AG04450 (cell line): ENCODE measurements at regions of chr12 and their contacts with region 1.

Region 1: DNA sequence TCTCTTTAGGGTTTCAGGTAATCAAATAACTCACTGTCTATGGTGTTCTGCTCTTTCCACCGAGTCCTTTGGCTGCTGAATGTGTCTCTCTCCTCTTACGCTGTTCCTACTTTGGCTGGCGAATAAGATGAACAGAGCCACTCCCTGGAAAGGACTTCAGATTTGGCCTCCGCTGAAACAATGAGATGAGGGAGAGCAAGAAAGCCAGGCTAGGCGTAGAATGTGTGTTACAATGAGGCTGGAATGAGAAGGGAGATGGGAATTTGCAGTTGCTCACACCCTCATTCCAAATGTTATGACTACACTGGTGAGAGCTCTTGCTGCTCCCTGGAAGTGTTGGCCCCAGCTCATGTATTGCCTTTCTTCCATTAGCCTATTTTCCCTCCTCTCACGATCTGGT is at the start of gene MFAP5:
- DNase-seq: no peak
- H3K4me3 ChIP-seq: no peak within 1 kb of the TSS
- H3K27ac ChIP-seq: no peak within 1 kb of the TSS
- H3K27me3 ChIP-seq: peaks cover 3% of the 10 kb centered on the region
- CTCF ChIP-seq: no peak
- polyA plus RNA-seq, gene MFAP5: 0.36 and 0.60 TPM in 2 replicates

Region 2: GRCh38 chr12:8420506-8420905 is 242.1 kb before region 1 on chr12:
- CTCF ChIA-PET with region 1: no interaction called
- POLR2A ChIA-PET with region 1: no interaction called
- DNase-seq: no peak
- H3K4me3 ChIP-seq: no peak overlapping the region
- H3K27ac ChIP-seq: no peak overlapping the region
- H3K27me3 ChIP-seq: no peaks in the 10 kb centered on the region
- CTCF ChIP-seq: no peak

Region 3: DNA sequence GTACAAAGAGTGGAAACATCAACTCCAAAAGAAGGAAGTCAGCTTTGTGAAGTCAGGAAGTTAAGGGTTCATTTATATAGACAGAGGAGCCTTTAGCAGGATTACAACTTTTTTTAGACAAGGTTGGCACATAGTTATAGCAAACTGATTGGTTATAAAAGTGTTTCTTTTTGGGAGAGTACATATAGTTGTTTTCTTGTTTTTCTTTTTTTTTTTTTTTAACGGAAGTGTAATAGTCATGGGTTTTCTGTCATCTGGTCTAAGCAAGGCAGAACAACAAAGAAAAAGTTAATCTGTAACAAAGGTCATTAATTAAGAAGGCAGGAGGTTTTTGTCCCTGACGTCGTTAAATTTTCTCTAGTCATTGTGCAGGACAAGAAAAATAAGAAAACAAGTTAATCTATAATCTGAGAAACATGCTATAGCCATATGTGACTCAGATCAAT is 13.0 kb after region 1 on chr12:
- CTCF ChIA-PET with region 1: interaction called, 25 read pairs
- POLR2A ChIA-PET with region 1: no interaction called
- DNase-seq: no peak
- H3K4me3 ChIP-seq: no peak overlapping the region
- H3K27ac ChIP-seq: no peak overlapping the region
- H3K27me3 ChIP-seq: no peaks in the 10 kb centered on the region
- CTCF ChIP-seq: no peak

Region 4: DNA sequence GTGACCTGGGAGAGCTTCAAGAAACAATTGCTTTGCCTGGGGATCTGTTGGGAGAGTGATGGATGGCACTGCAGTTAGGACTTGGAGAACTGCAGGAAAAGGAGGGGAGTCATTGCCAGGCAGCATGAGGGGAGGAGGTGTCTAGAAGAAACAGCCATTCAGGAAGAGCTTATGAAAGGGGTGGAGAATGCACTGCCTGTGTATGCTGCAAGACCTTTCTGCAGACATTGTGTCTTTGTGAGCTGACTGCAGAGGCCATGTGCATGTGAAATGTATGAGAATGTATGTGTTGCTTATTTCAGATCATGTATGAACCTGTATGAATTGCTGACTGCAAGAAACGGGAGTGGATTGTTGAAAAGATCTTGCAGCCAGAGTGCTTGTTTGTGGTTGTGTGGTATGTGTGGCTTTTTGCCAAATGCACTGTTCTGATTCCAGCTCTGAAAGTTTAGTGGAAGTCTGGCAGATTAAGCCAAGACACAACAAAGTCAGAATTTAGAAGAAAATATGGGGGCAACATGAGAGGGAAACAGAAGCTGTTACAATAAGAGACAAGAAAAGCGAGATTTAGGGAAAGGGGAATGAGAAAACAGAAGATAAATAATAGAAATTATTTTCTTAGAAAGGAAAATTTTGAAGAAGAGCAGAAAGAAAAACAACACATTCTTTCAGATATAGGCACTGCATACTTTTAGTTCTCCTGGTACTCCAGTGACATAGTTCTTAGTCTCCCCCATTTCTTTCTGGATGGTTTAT is 25.4 kb after region 1 on chr12:
- CTCF ChIA-PET with region 1: interaction called, 25 read pairs
- POLR2A ChIA-PET with region 1: no interaction called
- DNase-seq: peak; percentile 55
- H3K4me3 ChIP-seq: peak overlapping the region; percentile 1; the same call in 1 of the 2 replicates
- H3K27ac ChIP-seq: no peak overlapping the region
- H3K27me3 ChIP-seq: peaks cover 3% of the 10 kb centered on the region
- CTCF ChIP-seq: no peak

Region 5: GRCh38 chr12:8785499-8785898 is 122.9 kb after region 1 on chr12:
- CTCF ChIA-PET with region 1: no interaction called
- POLR2A ChIA-PET with region 1: no interaction called
- DNase-seq: no peak
- H3K4me3 ChIP-seq: no peak overlapping the region
- H3K27ac ChIP-seq: no peak overlapping the region
- H3K27me3 ChIP-seq: no peaks in the 10 kb centered on the region
- CTCF ChIP-seq: no peak

Region 6: DNA sequence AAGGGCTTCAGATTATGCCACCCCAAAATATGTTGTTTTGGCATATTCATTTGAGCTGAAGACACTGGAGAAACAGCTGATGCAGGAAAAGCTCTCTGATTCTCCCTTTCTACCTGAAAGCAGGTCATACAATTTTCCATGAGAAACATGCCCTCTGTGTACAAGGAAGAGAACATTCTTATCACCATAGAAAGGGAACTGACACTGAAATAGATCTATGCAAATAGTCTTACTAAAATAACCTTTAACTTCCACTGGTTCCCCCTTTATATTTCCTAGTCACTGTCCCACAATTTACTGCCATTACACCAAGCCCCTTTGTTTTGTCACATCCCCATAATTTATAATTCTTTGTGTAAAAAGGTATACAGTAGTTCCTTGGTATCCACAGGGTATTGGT is 242.1 kb after region 1 on chr12:
- CTCF ChIA-PET with region 1: interaction called, 11 read pairs
- POLR2A ChIA-PET with region 1: interaction called, 10 read pairs
- DNase-seq: no peak
- H3K4me3 ChIP-seq: no peak overlapping the region
- H3K27ac ChIP-seq: no peak overlapping the region
- H3K27me3 ChIP-seq: peaks cover 3% of the 10 kb centered on the region
- CTCF ChIP-seq: no peak

Region 7: DNA sequence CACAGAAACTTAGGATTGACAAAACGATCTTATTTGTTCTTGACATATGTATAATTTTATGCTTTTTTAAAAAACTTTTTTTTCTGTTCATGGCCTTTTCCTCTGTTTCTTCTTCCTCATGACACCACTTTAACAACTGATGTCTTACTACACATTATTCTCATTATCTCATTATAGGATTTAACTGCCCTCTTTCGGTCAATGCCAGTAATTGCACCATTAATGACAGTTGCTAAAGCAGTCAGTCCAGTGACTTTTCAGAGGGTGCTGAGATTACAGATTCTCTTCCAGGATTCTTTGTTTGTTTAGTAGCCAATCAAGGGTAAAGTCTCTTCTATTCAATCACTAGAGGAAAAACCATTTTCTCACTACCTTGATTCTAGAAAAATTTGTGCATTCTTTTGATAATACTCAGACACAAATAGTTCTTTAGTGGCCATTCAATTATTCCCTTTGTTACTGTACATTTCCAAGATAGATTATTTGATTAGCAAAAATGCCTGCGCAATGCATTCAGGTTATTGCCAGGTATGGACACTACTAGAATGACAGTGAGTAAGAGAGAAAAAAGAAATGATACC is 376.9 kb after region 1 on chr12:
- CTCF ChIA-PET with region 1: interaction called, 43 read pairs
- POLR2A ChIA-PET with region 1: no interaction called
- DNase-seq: peak; percentile 4
- H3K4me3 ChIP-seq: no peak overlapping the region
- H3K27ac ChIP-seq: no peak overlapping the region
- H3K27me3 ChIP-seq: no peaks in the 10 kb centered on the region
- CTCF ChIP-seq: peak; percentile 75